ENCODE measurements at regions of chr9 and their contacts with region 1.

Region 1: GRCh38 chr9:2181792-2182191 is 166.6 kb downstream of the SMARCA2 start:
- DNase-seq: no peak
- H3K4me3 Mint-ChIP-seq: no peak overlapping the region
- H3K27ac Mint-ChIP-seq: no peak overlapping the region
- H3K4me1 Mint-ChIP-seq: no peaks in the 10 kb centered on the region
- H3K27me3 Mint-ChIP-seq: no peaks in the 10 kb centered on the region

Region 2: GRCh38 chr9:2125906-2126305 is 55.9 kb before region 1 on chr9:
- CTCF ChIA-PET with region 1: interaction called, 18 read pairs
- DNase-seq: no peak
- H3K4me3 Mint-ChIP-seq: no peak overlapping the region
- H3K27ac Mint-ChIP-seq: peak overlapping the region; percentile 79
- H3K4me1 Mint-ChIP-seq: peaks cover 31% of the 10 kb centered on the region
- H3K27me3 Mint-ChIP-seq: no peaks in the 10 kb centered on the region

Region 3: DNA sequence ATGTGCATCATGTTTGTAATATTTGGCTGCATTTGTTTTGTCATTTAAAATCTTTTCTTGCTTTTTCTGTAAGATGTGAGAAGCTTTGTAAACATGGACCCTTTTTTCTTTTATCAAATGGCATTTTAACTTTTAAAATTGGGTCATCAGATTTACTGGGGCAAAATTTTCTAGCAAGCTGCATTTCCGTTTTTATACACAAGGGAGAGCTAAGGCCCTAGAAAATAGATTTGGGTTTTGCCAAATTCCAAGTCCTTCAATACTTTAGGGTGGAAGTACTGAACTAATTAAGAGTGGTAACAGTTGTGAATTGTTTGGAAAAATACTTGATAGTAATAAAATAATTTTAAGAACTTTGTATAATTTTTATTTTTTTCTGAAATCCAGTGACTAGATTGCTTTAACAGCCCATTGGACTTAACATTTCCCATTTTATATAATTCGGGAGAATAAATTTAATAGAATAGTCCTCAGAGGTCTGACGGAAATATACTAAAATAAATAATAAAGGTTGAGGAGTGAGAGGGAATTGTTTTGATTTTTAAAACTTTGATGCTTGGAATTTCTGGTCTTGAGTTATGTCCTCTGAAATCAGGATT is 49.2 kb before region 1 on chr9:
- CTCF ChIA-PET with region 1: interaction called, 18 read pairs
- DNase-seq: no peak
- H3K4me3 Mint-ChIP-seq: no peak overlapping the region
- H3K27ac Mint-ChIP-seq: no peak overlapping the region
- H3K4me1 Mint-ChIP-seq: peaks cover 17% of the 10 kb centered on the region
- H3K27me3 Mint-ChIP-seq: no peaks in the 10 kb centered on the region

Region 4: DNA sequence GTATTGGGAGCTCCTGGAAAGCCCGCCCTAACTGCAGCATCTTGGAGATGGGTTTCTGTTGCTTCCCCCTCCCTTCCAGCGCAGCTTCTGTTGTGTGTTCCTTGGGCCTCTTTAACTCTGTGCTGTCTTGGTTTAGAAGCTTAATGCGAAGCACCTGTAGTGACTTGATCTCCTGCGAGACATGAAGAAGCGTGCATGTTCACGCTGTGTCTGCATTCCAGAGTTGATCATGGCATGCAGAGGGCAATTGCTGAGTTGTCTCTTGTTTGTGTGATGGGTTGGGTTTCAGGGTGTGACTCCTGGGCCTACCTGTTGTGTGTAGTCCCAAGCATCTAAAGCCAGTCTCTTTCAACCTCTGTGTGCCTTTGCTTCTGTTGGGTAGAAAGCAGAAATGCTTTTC is 11.1 kb before region 1 on chr9:
- CTCF ChIA-PET with region 1: interaction called, 11 read pairs
- DNase-seq: no peak
- H3K4me3 Mint-ChIP-seq: no peak overlapping the region
- H3K27ac Mint-ChIP-seq: no peak overlapping the region
- H3K4me1 Mint-ChIP-seq: peaks cover 3% of the 10 kb centered on the region
- H3K27me3 Mint-ChIP-seq: no peaks in the 10 kb centered on the region

Region 5: GRCh38 chr9:2229109-2229721 is 47.4 kb after region 1 on chr9:
- CTCF ChIA-PET with region 1: no interaction called
- DNase-seq: no peak
- H3K4me3 Mint-ChIP-seq: no peak overlapping the region
- H3K27ac Mint-ChIP-seq: peak overlapping the region; percentile 61
- H3K4me1 Mint-ChIP-seq: peaks cover 15% of the 10 kb centered on the region
- H3K27me3 Mint-ChIP-seq: peaks cover 4% of the 10 kb centered on the region

Region 6: GRCh38 chr9:2260354-2261306 is 78.8 kb after region 1 on chr9:
- CTCF ChIA-PET with region 1: no interaction called
- DNase-seq: no peak
- H3K4me3 Mint-ChIP-seq: no peak overlapping the region
- H3K27ac Mint-ChIP-seq: no peak overlapping the region
- H3K4me1 Mint-ChIP-seq: no peaks in the 10 kb centered on the region
- H3K27me3 Mint-ChIP-seq: peaks cover 16% of the 10 kb centered on the region

Region 7: DNA sequence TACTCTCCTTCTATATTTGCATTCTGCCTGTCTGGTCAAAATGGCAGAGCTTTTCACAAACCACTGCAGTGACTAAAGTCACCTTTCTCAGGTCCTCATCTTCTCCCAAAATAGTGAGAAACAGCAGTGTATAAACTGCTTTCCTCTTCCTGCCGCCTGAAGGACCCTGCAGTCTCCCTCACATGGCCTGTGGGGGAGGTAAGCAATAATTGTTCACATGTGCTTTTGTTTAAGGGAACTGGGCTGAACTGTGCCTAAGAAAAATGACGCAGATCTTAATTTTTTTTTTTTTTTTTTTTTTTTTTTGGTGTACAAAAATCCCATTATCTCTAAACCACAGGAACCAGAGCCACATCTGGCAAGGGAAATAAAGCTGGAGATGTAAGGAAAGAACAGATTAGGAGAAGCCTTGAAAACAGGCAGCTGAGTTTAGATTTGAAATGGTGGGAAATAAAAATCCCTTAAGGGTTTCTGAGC is 308.1 kb after region 1 on chr9:
- CTCF ChIA-PET with region 1: no interaction called
- DNase-seq: no peak
- H3K4me3 Mint-ChIP-seq: no peak overlapping the region
- H3K27ac Mint-ChIP-seq: no peak overlapping the region
- H3K4me1 Mint-ChIP-seq: no peaks in the 10 kb centered on the region
- H3K27me3 Mint-ChIP-seq: no peaks in the 10 kb centered on the region

Measured in activated naive CD4-positive, alpha-beta T cell treated with anti-CD3 and anti-CD28 coated beads, Interleukin-2, amount 10 ng/mL, durations not matched to agents 7 days and 5 days (primary cell).